Ovary (tissue), 10 donors: ENCODE measurements at regions of chr16 and their contacts with region 1.

Region 1: DNA sequence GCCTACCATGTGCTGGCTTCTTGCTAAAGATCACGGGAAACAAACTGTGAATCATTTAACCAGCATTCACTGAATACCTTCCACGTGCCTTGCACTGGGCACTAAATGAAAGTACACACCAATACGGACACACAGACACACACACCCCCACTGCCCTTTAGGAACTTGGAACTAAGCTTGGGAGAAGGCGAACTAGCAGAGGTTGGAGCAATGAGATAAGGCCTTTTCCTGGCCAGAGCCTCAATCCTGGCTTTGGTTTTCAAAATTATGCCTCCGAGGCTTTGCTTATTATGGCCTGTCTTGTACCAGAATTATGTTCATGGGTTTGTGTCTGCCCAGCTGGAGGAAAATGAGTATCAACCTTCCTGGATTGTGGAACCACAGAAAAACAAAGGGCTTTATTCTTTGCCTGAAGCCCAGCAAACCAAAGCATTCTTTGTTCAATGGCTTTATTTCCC is 32.3 kb downstream of the CPPED1 start:
- DNase-seq: no peak
- H3K4me3 ChIP-seq: no peak overlapping the region
- H3K27ac ChIP-seq: no peak overlapping the region
- H3K4me1 ChIP-seq: no peaks in the 10 kb centered on the region
- H3K27me3 ChIP-seq: no peaks in the 10 kb centered on the region
- CTCF ChIP-seq: no peak
- EP300 ChIP-seq: no peak
- POLR2A ChIP-seq: no peak

Region 2: DNA sequence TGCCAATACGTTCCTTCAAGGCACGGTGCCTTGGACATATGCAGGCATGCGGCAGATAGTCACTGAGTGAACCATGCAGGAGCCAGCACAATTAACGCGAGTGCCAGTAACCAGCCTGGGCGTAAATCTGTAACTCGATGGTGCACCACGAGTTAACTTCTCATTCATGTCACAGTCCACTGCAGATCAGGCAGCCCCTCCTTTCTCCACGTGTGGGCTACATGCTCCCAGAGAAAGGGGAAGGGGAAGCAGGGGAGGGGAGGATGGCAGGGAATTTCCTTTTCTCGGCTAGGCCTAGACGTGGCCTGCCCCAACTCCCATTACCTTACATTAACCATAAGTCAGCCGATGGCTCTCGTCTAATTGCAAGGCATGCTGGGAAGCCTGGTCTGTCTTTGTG is 255.6 kb before region 1 on chr16:
- intact Hi-C with region 1: no loop called
- DNase-seq: no peak
- H3K4me3 ChIP-seq: no peak overlapping the region
- H3K27ac ChIP-seq: no peak overlapping the region
- H3K4me1 ChIP-seq: peaks cover 13% of the 10 kb centered on the region
- H3K27me3 ChIP-seq: no peaks in the 10 kb centered on the region
- CTCF ChIP-seq: no peak
- EP300 ChIP-seq: no peak
- POLR2A ChIP-seq: no peak

Region 3: DNA sequence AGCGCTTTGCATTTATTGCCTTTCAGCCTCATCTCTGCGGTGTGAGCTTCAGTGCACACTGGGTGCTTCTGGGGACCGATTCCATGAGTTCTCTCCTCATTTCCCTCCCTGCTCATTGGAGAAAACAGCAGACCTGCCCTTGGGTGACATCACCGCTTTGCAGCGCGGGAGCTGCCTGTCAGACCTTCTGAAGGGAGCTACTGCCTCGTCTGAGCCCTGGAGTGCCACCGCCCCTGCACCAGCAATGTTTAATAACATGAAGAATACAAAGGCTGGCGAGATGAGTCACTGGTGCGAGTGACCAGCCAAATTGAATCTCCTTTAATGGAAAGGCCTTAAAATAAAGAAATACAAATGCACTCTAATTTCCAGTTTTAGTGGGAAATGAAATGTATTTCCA is 62.6 kb after region 1 on chr16:
- intact Hi-C with region 1: loop called in 1 of 4 experiments (anchors 10 kb)
- DNase-seq: no peak
- H3K4me3 ChIP-seq: no peak overlapping the region
- H3K27ac ChIP-seq: no peak overlapping the region
- H3K4me1 ChIP-seq: no peaks in the 10 kb centered on the region
- H3K27me3 ChIP-seq: no peaks in the 10 kb centered on the region
- CTCF ChIP-seq: no peak
- EP300 ChIP-seq: no peak
- POLR2A ChIP-seq: no peak

Region 4: DNA sequence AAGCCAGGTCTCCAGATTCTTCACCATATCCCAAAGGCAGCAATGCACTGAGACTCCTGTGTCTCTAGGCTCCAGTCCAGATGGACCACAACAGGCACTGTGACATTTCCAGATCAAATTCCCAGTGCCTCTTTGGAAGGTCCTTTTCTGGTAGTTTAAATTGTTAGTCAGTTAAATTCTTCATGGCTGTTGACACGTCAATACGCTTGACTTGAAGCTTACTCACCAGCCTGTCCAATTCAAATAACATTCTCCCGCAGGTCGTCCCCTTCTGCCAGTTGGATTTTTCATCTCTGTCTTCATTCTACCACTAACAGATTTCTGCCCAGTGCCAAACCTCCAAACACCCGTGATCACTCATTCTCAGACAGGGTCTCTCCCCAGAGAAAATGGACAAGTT is 216.7 kb after region 1 on chr16:
- intact Hi-C with region 1: no loop called
- DNase-seq: no peak
- H3K4me3 ChIP-seq: no peak overlapping the region
- H3K27ac ChIP-seq: no peak overlapping the region
- H3K4me1 ChIP-seq: no peaks in the 10 kb centered on the region
- H3K27me3 ChIP-seq: no peaks in the 10 kb centered on the region
- CTCF ChIP-seq: no peak
- EP300 ChIP-seq: no peak
- POLR2A ChIP-seq: no peak